Ascending aorta (tissue), 2 donors: ENCODE measurements at regions of chr3 and their contacts with region 1.

Region 1: DNA sequence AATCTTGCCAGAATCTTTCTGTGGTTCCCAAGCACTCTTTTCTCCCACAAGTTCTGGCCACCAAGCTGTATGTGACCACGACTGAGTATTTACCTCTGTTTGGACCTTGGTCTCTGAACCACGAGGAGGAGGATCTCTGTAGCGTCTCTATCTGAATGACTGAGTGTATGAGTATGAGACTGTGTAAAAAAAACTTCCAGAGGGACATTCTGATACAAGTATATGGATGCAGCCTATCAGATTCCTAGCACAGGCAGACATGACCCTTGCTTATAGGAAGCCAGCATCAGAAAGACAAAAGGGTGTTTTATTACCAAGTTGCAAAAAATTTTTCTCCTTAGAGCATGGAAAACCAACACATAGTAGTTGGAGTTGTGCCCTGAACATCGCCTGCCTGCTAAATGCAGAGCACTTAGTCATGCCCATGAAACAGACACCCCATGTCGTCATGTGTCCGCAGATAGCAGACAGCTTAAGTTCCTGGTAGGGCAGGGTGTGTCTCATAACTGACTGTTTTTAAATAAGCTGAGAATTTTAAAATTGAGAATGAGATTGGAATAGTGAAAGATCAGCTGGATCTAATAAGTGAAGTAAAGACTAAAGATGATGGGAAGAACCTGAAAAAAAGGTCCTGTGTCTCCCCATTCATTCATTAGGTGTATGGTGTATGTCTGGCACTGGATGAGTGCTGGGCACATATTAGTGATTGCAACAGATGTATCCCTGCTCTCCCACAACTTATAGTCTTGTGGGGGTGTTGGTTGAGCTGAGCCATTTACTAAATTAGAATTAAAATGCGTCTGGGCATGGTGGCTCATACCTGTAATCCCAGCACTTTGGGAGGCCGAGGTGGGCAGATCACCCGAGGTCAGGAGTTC is 30.9 kb downstream of the DAG1 start:
- DNase-seq: peak; percentile 63 to 94
- H3K4me3 ChIP-seq: peak overlapping the region in 1 of 2 donors; percentile 22
- H3K27ac ChIP-seq: peak overlapping the region; percentile 92 to 93
- H3K4me1 ChIP-seq: peaks cover 6 to 26% of the 10 kb centered on the region in 2 donors
- H3K27me3 ChIP-seq: no peaks in the 10 kb centered on the region
- CTCF ChIP-seq: no peak

Region 2: DNA sequence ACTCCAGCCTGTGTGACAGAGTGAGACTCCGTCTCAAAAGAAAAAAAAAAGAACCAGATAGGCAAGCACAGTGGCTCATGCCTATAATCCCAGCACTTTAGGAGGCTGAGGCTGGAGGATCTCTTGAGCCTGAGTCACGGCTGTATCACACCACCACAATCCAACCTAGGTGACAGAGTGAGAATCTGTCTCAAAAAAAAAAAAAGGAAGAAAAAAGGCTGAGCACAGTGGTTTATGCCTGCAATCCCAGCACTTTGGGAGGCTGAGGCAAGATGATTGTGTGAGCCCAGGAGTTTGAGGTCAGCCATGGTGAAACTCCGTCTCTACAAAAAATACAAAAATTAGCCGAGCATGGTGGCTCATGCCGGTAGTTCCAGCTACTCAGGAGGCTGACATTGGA is 66.2 kb before region 1 on chr3:
- intact Hi-C with region 1: no loop called
- DNase-seq: no peak
- H3K4me3 ChIP-seq: no peak overlapping the region
- H3K27ac ChIP-seq: no peak overlapping the region
- H3K4me1 ChIP-seq: no peaks in the 10 kb centered on the region
- H3K27me3 ChIP-seq: no peaks in the 10 kb centered on the region
- CTCF ChIP-seq: no peak

Region 3: DNA sequence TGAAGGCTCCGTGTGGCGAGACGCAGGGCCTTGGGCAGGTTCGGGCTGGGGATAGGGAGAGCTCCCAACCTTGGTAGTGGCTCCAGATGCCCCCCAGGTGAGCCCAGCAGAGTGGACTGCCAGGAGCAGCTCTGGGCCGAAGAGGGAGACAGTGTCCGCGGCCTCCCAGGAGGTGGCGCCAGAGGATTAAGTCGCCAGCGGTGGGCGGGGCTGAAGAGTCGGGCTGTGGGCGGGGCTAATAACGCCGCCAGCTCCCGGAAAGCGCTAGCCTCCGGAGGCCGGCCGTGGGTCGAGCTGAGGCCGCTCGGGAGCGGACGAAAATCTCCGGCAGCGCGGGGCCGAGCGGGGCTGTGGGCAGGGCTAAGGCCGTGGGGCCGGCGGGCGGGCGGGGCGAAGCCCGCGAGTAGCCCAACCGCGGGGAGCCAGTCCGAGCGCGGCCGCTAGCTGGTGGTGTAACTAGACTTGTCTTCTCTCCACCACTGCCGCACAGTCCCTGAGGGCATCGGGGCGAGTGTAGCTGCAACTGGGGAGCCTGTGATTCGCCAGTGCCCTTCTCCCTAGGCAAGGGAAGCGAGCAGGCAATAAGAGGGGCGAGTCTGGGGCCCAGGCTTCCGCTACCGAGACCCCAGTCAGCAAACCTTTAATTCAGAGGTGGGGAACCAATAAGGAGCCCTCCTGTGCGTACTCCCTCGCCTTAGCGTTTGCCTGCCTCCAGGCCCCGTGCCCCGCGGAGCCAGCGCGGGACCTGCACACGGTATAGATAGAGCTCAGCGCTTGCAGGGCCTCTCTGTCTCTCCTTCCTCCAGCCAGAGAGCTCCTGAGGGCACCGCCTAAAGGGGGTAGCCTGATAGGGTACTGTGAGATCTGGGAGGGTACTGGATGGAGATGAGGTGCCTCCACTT is 38.9 kb after region 1 on chr3:
- intact Hi-C with region 1: no loop called
- DNase-seq: peak; percentile 67 to 95
- H3K4me3 ChIP-seq: peak overlapping the region; percentile 37 to 66
- H3K27ac ChIP-seq: peak overlapping the region; percentile 67 to 87
- H3K4me1 ChIP-seq: no peaks in the 10 kb centered on the region
- H3K27me3 ChIP-seq: no peaks in the 10 kb centered on the region
- CTCF ChIP-seq: peak; percentile 88 to 94 (median 94)

Region 4: GRCh38 chr3:50163572-50164455 is 662.8 kb after region 1 on chr3:
- intact Hi-C with region 1: loop called (anchors 5 kb)
- DNase-seq: peak; percentile 69 to 96
- H3K4me3 ChIP-seq: peak overlapping the region in 1 of 2 donors; percentile 43
- H3K27ac ChIP-seq: peak overlapping the region; percentile 88 to 94
- H3K4me1 ChIP-seq: peaks cover 32 to 85% of the 10 kb centered on the region in 2 donors
- H3K27me3 ChIP-seq: no peaks in the 10 kb centered on the region
- CTCF ChIP-seq: no peak